ENCODE measurements at regions of chr10 and their contacts with region 1.

Region 1: GRCh38 chr10:95445837-95446486 is 115.2 kb downstream of the SORBS1 start:
- DNase-seq: peak; percentile 73
- H3K4me3 ChIP-seq: no peak overlapping the region
- H3K27ac ChIP-seq: peak overlapping the region; percentile 80
- H3K4me1 ChIP-seq: peaks cover 24% of the 10 kb centered on the region
- H3K27me3 ChIP-seq: no peaks in the 10 kb centered on the region
- CTCF ChIP-seq: peak; percentile 74 to 79
- POLR2A ChIP-seq: no peak

Region 2: GRCh38 chr10:95333997-95334804 is 111.8 kb before region 1 on chr10:
- CTCF ChIA-PET with region 1: no interaction called
- POLR2A ChIA-PET with region 1: no interaction called
- dilution Hi-C with region 1: no loop called
- intact Hi-C with region 1: no loop called
- DNase-seq: peak; percentile 89
- H3K4me3 ChIP-seq: no peak overlapping the region
- H3K27ac ChIP-seq: peak overlapping the region; percentile 96
- H3K4me1 ChIP-seq: peaks cover 30% of the 10 kb centered on the region
- H3K27me3 ChIP-seq: no peaks in the 10 kb centered on the region
- CTCF ChIP-seq: no peak
- POLR2A ChIP-seq: peak; percentile 57

Region 3: GRCh38 chr10:95374597-95375209 is 71.3 kb before region 1 on chr10:
- CTCF ChIA-PET with region 1: interaction called, 16 read pairs
- POLR2A ChIA-PET with region 1: no interaction called
- dilution Hi-C with region 1: no loop called
- intact Hi-C with region 1: no loop called
- DNase-seq: peak; percentile 50
- H3K4me3 ChIP-seq: no peak overlapping the region
- H3K27ac ChIP-seq: no peak overlapping the region
- H3K4me1 ChIP-seq: no peaks in the 10 kb centered on the region
- H3K27me3 ChIP-seq: peaks cover 0 to 7% of the 10 kb centered on the region in 2 experiments
- CTCF ChIP-seq: peak; percentile 83 to 91
- POLR2A ChIP-seq: no peak

Region 4: GRCh38 chr10:95459446-95460045 is 13.6 kb after region 1 on chr10:
- CTCF ChIA-PET with region 1: interaction called, 11 read pairs
- POLR2A ChIA-PET with region 1: no interaction called
- dilution Hi-C with region 1: no loop called
- intact Hi-C with region 1: no loop called
- DNase-seq: no peak
- H3K4me3 ChIP-seq: no peak overlapping the region
- H3K27ac ChIP-seq: no peak overlapping the region
- H3K4me1 ChIP-seq: no peaks in the 10 kb centered on the region
- H3K27me3 ChIP-seq: peaks cover 0 to 2% of the 10 kb centered on the region in 2 experiments
- CTCF ChIP-seq: no peak
- POLR2A ChIP-seq: no peak

Region 5: DNA sequence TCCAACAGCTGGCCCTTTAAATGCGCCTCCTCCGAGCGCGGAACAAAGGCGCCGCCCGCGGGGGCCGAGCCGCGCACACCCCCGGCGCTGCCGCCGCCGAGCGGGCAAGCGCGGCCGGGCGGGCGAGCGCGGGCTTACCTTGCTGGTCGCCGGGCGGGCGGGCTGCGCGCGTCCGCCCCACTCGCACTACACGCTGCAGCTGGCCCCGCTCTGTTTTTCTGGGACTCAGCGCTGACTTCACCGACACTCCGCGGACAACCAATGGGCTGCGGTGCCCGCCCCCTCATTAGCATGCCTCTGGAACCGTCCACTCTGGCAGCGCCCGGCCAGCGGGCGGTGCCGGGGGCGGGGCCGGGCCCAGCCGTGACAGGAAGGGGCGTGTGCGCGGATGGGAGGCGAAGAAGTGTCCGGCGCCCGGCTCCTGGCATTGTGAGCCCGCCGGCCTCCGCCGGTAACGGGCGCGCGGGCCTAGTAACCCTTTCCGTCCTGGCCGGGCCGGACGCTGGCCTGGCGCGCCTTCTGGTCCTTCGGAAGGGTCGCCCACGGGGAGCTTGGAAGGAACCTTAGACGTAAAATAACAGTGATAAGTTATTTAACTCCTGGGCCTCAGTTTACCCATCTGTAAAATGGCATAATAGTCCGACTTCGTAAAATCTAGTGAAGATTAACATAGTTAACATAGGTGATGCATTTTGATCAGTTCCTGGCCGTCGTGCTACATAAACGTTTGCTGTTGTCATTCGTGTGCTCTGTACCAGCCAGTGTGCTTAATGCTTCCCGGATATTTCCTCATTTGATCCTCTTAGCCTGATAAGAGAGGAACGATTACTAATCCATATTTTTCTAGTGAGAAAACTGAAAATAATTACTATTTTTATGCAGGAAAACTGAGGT is 115.5 kb after region 1 on chr10 and contains the start of gene SORBS1:
- CTCF ChIA-PET with region 1: interaction called, 6 read pairs
- POLR2A ChIA-PET with region 1: no interaction called
- dilution Hi-C with region 1: no loop called
- intact Hi-C with region 1: loop called (anchors 1 kb)
- DNase-seq: peak; percentile 98
- H3K4me3 ChIP-seq: peak within 1 kb of the TSS; percentile 74 to 94 (median 88)
- H3K27ac ChIP-seq: peak within 1 kb of the TSS; percentile 55
- H3K4me1 ChIP-seq: peaks cover 2% of the 10 kb centered on the region
- H3K27me3 ChIP-seq: peaks cover 2 to 7% of the 10 kb centered on the region in 2 experiments
- CTCF ChIP-seq: no peak
- POLR2A ChIP-seq: peak; percentile 65
- total RNA-seq, gene SORBS1: 3.2 and 7.9 TPM in 2 replicates

Region 6: DNA sequence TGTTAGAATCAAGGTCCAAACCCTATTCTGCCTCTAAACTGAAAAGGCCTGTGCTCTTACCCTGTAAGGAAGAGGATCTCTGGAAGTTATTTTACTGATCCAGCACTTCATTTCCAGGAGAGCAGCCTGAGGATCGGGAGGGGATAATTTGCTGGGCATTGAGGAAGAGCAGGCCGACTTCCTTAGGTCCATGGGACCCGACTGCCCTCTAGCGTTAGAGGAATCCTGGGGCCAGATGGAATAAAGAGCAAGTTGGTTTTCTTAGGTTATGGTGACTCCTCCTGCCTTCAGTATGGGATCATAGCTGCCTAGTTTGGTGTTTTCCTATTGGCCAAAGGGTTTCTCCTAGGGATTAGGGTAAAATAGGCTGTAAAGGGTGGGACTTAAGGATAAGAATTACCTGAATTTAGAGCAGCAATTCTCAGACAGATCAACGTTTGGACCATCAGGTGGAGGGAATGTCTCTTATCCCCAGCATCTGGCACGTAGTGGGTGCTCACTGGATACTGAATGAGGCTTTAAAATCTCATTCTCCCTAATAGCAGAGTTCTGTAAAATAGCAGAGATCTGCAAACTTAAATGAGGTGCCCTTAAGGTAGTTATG is 155.3 kb after region 1 on chr10:
- CTCF ChIA-PET with region 1: interaction called, 18 read pairs
- POLR2A ChIA-PET with region 1: no interaction called
- dilution Hi-C with region 1: no loop called
- intact Hi-C with region 1: loop called (anchors 1 kb)
- DNase-seq: peak; percentile 89
- H3K4me3 ChIP-seq: no peak overlapping the region
- H3K27ac ChIP-seq: no peak overlapping the region
- H3K4me1 ChIP-seq: no peaks in the 10 kb centered on the region
- H3K27me3 ChIP-seq: peaks cover 0 to 7% of the 10 kb centered on the region in 2 experiments
- CTCF ChIP-seq: peak; percentile 90 to 96
- POLR2A ChIP-seq: no peak

Measured in endothelial cell of umbilical vein (primary cell).